HEK293 (cell line): ENCODE measurements at regions of chr12 and their contacts with region 1.

Region 1: GRCh38 chr12:49866859-49867579 is 24.1 kb upstream of the BCDIN3D start:
- H3K4me3 ChIP-seq: no peak overlapping the region
- H3K27ac ChIP-seq: no peak overlapping the region
- H3K4me1 ChIP-seq: peaks cover 14% of the 10 kb centered on the region
- CTCF ChIP-seq: peak; percentile 88

Region 2: GRCh38 chr12:49842519-49843352 is 24.3 kb before region 1 on chr12 and contains the start of gene BCDIN3D:
- CTCF ChIA-PET with region 1: interaction called, 12 read pairs
- POLR2A ChIA-PET with region 1: interaction called, 4 read pairs
- H3K4me3 ChIP-seq: peak within 1 kb of the TSS; percentile 60
- H3K27ac ChIP-seq: peak within 1 kb of the TSS; percentile 89
- H3K4me1 ChIP-seq: peaks cover 6% of the 10 kb centered on the region; the same call in 1 of the 2 replicates
- CTCF ChIP-seq: no peak

Region 3: GRCh38 chr12:49893753-49894752 is 27.0 kb after region 1 on chr12:
- CTCF ChIA-PET with region 1: interaction called, 27 read pairs
- POLR2A ChIA-PET with region 1: interaction called, 7 read pairs
- H3K4me3 ChIP-seq: no peak overlapping the region
- H3K27ac ChIP-seq: no peak overlapping the region
- H3K4me1 ChIP-seq: no peaks in the 10 kb centered on the region
- CTCF ChIP-seq: no peak

Region 4: GRCh38 chr12:49945394-49946080 is 78.5 kb after region 1 on chr12:
- CTCF ChIA-PET with region 1: interaction called, 76 read pairs
- POLR2A ChIA-PET with region 1: interaction called, 6 read pairs
- H3K4me3 ChIP-seq: peak overlapping the region; percentile 14; the same call in 1 of the 2 replicates
- H3K27ac ChIP-seq: no peak overlapping the region
- H3K4me1 ChIP-seq: no peaks in the 10 kb centered on the region
- CTCF ChIP-seq: peak; percentile 98

Region 5: DNA sequence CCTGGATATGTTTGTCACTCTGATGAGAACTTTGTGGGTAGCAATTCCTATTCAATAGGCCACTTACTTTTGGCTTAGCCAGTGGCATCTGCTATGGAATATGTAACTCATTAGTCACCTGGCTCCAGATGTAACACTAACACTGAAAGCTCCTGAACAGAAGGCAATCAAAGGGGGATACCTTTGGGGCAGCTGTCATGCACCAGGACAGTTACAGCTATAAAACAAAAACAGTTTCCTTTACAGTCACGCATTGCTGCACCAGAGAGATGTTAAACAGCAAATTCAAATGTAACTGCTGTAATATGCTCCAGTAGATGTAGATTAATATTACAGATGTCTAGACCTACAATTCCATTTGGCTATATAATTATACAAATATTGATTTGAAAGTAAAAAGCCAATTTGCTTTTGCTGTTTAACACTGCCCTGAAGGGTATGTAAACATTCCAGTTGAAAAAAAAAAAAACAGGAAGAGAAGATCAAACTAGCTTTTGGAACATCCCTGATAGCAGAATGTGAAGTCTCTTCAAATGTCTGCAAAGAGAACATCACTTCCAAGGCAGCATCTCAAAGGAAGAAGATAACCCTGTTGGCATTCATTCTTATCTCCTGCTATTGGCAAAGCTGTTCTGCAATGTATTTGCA is 139.9 kb after region 1 on chr12:
- CTCF ChIA-PET with region 1: interaction called, 10 read pairs
- POLR2A ChIA-PET with region 1: no interaction called
- H3K4me3 ChIP-seq: no peak overlapping the region
- H3K27ac ChIP-seq: no peak overlapping the region
- H3K4me1 ChIP-seq: no peaks in the 10 kb centered on the region
- CTCF ChIP-seq: no peak

Region 6: DNA sequence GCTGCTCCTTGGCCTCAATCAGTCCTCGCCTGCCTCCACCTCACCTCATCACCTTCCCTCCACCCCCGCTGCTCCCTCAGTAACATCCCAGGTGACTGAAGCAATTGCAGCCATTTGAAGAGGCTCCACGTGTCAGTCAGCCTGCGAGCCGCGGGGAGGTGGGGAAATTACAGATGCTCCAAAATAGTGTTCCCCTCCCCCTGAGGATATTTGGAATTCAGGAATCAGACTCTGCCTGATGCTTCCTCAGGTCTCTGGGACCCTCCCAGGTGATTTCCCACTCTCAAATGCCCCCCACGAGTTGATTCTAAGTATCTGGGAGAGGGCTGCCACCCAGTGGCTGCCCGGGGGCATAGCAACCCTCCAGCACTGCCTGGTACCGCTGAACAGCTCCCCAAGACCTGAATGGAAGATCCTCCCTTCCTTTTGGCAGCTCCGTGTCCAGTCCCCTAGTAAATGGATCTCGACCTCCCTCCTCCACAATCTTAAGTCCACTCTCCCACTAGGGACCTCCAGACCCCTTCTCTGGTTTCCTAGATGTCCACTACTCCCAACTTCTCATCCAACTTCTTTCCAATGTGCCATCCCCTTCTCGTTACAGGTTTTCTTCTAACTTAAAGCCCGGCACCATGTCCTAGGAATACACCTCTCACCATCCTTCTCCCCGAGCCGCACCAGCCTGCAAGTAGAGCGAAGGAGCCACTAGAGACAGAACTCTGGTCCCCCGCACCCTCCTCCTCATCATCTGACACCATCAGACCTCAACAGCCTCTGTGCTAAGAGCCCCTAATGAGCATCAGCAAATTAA is 189.0 kb after region 1 on chr12:
- CTCF ChIA-PET with region 1: interaction called, 14 read pairs
- POLR2A ChIA-PET with region 1: interaction called, 3 read pairs
- H3K4me3 ChIP-seq: no peak overlapping the region
- H3K27ac ChIP-seq: no peak overlapping the region
- H3K4me1 ChIP-seq: no peaks in the 10 kb centered on the region; the same call in 1 of the 2 replicates
- CTCF ChIP-seq: peak; percentile 86

Region 7: DNA sequence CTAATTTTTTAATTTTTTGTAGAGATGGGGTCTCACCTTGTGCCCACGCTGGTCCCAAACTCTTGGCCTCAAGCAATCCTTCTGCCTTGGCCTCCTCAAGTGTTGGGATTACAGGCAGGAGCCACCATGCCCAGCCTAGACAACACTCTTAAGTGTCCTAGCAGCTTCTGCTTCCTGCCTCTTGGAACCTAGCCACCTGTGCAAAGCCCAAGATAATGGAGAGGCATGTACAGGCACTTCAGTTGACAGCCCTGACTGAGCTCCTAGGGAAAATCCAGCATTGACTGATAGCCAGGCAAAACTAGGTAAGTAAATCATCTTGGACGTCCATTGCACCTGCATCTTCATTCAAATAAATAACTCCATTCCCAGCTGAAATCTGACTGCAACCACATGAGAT is 260.5 kb after region 1 on chr12:
- CTCF ChIA-PET with region 1: no interaction called
- POLR2A ChIA-PET with region 1: no interaction called
- H3K4me3 ChIP-seq: no peak overlapping the region
- H3K27ac ChIP-seq: no peak overlapping the region
- H3K4me1 ChIP-seq: no peaks in the 10 kb centered on the region
- CTCF ChIP-seq: no peak